Activated CD8-positive, alpha-beta T cell treated with anti-CD3 and anti-CD28 coated beads, Interleukin-2, amount 10 ng/mL, durations not matched to agents 7 days and 5 days (primary cell): ENCODE measurements at regions of chr2 and their contacts with region 1.

Region 1: DNA sequence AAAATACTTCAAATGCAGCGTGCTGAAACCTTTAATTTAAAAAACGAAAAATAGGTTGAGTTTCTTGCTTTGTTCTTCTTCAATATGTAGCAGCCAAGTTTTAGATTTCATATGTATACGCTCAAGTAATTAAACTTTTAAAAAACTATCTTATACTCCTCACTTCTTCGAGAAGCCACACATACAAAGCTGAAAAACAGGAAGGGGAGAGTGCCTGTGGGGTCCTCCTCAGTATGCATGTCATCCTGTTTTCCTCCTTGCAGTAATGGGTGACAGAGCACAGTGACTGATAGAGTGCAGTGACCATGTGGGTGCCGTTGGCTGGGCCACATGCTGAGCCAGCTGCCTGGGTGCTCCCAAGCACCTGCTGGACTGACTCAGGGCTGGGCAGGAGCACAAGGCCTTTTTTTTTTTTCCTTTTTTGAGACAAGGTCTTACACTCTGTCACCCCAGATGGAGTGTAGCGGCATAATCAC is 33.3 kb downstream of the UXS1 start:
- DNase-seq: peak; percentile 66
- ATAC-seq: peak; percentile 63
- H3K4me3 Mint-ChIP-seq: peak overlapping the region; percentile 91
- H3K27ac Mint-ChIP-seq: peak overlapping the region; percentile 98
- H3K4me1 Mint-ChIP-seq: peaks cover 80% of the 10 kb centered on the region
- H3K27me3 Mint-ChIP-seq: no peaks in the 10 kb centered on the region

Region 2: GRCh38 chr2:106115250-106115649 is 45.6 kb before region 1 on chr2:
- CTCF ChIA-PET with region 1: no interaction called
- POLR2A ChIA-PET with region 1: no interaction called
- DNase-seq: no peak
- ATAC-seq: no peak
- H3K4me3 Mint-ChIP-seq: no peak overlapping the region
- H3K27ac Mint-ChIP-seq: peak overlapping the region; percentile 56
- H3K4me1 Mint-ChIP-seq: peaks cover 12% of the 10 kb centered on the region
- H3K27me3 Mint-ChIP-seq: no peaks in the 10 kb centered on the region

Region 3: DNA sequence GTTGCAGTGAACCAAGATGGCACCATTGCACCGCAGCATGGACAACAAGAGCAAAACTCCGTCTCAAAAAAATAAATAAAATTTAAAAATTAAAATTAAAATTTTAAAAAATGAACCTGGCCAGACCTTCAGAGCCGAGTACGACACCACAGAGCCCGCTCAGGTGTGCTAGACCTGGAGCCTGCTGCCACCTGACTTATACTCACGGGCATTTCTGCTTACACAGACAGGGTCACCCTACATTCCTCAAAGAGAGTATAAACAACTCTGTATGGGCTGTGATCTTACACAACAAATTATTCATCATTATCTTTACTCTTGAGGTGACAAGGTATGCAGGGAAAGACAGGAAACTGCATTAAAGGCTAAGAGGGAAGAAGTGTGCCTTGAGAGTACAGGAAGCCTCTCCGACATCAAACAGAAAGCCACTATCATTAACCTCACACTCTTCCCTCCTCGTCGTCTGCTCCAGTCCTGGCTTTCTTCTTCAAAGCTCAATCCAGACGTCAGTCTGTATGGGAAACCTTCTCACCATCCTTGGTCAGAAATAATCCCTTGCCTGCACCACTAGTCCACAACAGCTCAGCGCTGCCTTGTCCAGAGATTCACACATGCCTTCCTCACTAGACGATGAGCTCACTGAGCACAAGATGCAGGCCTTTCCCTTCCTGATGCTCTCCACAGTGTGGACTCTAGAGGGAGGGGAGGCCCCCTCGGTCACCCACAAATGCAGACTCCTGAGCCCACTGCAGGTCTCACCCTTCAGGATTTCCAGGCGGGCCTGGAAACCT is 22.9 kb before region 1 on chr2:
- CTCF ChIA-PET with region 1: interaction called, 65 read pairs
- POLR2A ChIA-PET with region 1: interaction called, 21 read pairs
- DNase-seq: peak; percentile 33
- ATAC-seq: peak; percentile 75
- H3K4me3 Mint-ChIP-seq: peak overlapping the region; percentile 66
- H3K27ac Mint-ChIP-seq: peak overlapping the region; percentile 83
- H3K4me1 Mint-ChIP-seq: peaks cover 45% of the 10 kb centered on the region
- H3K27me3 Mint-ChIP-seq: no peaks in the 10 kb centered on the region

Region 4: GRCh38 chr2:106147159-106147558 is 13.7 kb before region 1 on chr2:
- CTCF ChIA-PET with region 1: interaction called, 65 read pairs
- POLR2A ChIA-PET with region 1: interaction called, 102 read pairs
- DNase-seq: no peak
- ATAC-seq: no peak
- H3K4me3 Mint-ChIP-seq: peak overlapping the region; percentile 46
- H3K27ac Mint-ChIP-seq: peak overlapping the region; percentile 87
- H3K4me1 Mint-ChIP-seq: peaks cover 85% of the 10 kb centered on the region
- H3K27me3 Mint-ChIP-seq: no peaks in the 10 kb centered on the region

Region 5: DNA sequence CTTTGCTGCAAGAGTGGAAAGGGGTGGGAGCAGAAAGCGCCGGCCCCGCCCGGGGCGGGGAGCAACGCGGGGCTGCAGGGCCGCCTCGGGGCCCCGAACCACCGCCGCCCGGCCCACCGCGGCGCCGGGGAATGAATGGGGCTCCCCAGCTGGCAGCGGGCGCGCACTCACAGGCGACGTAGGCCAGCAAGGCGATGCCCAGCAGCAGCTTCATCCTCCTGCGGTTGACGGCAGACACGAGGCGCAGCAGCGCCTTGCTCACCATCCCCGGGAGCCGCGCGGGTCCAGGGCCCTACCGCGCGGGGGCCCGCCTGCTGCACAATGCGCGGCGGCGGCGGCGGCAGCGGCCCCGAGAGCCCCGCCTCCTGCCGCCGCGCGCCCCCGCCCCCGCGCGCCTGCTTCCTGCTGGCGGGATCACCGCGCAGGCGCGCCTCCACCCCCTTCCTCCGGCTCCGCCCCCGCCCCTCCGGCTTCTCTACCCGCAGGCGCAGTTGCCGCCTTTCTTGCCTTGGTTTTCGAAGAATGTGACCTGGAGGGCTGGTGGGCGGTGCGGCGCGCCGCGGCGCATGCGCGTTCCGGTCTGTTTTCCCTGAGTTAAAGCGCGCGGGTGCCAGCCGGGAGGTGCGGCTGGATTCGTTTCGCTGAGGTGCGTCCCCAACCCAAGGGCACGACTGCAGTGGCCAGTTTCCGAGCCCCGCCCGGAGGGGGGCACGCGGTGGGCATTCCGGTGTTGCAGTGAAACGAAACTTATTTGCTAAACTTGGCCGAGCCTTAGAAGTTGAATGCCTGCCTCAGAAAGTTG is 33.4 kb after region 1 on chr2 and contains the start of gene UXS1:
- CTCF ChIA-PET with region 1: interaction called, 13 read pairs
- POLR2A ChIA-PET with region 1: interaction called, 62 read pairs
- DNase-seq: peak; percentile 99
- ATAC-seq: peak; percentile 84
- H3K4me3 Mint-ChIP-seq: peak within 1 kb of the TSS; percentile 88
- H3K27ac Mint-ChIP-seq: peak within 1 kb of the TSS; percentile 86
- H3K4me1 Mint-ChIP-seq: peaks cover 44% of the 10 kb centered on the region
- H3K27me3 Mint-ChIP-seq: peaks cover 2% of the 10 kb centered on the region
- total RNA-seq, gene UXS1: 95.3 to 100 TPM

Region 6: DNA sequence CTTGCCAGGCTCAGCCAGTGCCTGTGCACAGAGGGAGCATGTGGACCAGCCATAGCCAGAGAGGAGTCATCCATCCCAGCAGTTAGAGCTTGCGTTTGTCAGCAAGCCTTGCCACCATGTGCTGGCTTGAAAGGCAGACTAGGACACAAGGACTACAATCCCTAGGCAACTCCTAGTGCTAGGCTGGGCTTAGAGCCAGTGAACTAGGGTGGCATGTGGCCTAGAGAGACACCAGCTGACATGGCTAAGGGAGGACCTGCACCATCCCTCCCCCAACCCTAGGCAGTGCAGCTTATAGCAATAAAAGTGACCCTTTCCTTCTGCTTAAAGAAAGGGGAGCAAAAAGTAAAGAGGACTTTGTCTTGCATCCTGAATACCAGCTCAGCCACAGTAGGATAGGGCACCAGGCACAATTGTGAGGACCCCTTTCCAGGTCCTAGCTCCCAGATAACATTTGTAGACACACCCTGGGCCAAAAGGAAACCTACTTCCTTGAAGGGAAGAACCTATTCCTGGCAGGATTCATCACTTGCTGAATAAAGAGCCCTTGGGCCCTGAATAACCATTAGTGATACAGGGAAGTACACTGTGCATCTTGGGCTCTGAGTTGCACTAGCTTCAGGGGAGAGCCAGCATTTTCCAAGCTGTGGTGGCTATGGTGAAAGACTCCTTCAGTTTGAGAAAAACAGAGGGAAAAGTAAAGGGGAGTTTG is 72.0 kb after region 1 on chr2:
- CTCF ChIA-PET with region 1: no interaction called
- POLR2A ChIA-PET with region 1: no interaction called
- DNase-seq: no peak
- ATAC-seq: no peak
- H3K4me3 Mint-ChIP-seq: no peak overlapping the region
- H3K27ac Mint-ChIP-seq: no peak overlapping the region
- H3K4me1 Mint-ChIP-seq: no peaks in the 10 kb centered on the region
- H3K27me3 Mint-ChIP-seq: peaks cover 3% of the 10 kb centered on the region